Left cardiac atrium (tissue), 4 donors: ENCODE measurements at regions of chr6 and their contacts with region 1.

Region 1: DNA sequence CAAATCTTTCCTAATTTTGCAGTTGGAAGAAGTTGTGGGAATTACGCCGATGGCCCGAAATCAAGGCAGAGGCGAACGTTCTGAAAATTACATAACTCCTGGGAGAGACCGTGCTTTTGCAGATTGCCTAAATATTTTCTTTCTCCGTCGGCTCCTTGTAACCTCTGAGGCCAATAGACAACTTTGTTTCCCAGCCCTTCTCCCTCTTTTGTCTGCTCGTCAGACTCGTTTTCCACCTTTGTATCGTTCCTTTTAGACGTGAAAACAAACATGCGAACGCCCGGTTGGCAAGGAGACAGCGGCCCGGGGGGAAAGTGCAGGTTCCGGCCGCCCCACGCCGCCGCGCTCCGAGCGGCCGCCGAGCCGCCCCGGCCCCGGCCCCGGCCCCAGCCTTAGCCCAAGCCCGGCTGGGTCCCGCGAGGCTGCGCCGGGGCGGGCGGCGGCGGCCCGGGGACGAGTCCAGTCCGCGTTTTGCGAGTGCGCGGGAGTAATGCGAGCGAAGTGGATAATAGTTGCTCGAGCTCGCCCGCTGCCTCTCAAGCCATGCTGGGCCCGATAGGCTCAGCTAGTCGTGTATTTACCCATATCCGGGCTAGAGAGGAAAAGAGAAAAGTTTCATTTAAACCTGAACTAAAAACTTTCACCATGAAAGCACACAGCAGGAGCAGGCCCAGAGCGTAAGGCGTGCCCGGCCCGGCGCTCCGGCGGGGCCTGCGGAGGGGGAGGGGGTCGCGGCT is at the start of gene ARID1B:
- DNase-seq: peak; percentile 87
- ATAC-seq: peak; percentile 75 to 80
- total RNA-seq, gene ARID1B: 45.4 to 48.0 TPM

Region 2: DNA sequence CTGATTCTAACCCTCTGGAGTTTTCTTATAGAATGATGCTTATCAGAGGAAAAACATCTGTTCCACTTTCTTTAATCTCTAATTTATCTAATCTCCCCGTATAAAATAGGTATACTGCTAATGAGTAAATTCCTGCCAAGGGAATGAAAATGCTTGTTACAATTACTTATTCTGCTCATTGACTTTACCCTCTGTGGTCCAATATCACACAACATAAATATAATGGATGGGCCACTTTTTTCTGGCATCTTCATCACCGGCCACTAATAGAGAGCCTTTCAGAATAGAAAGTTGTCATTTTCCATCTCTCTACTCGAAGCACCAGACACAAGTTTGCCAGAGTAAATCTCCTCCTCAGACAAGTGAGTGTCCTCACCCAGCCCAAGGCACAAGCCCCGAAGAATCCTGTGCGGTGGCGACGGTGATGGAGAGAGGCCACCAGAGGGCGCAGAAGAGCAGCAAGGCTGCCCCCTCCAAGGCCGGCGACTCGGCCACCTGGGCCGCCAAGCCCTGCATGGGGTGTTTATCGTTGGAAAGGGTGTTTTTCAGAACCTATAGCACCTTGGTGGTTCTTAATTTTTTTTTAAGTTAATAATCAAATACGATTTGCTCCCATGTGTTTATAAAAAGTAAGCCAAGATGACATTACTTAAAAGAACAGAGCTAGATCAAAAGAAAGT is 212.7 kb before region 1 on chr6:
- intact Hi-C with region 1: loop called (anchors 5 to 10 kb)
- DNase-seq: peak; percentile 84
- ATAC-seq: peak; percentile 93 to 94

Region 3: GRCh38 chr6:156699017-156699421 is 78.0 kb before region 1 on chr6:
- intact Hi-C with region 1: loop called in 1 of 2 experiments (anchors 5 kb)
- DNase-seq: no peak
- ATAC-seq: no peak

Region 4: GRCh38 chr6:156953479-156954146 is 176.6 kb after region 1 on chr6:
- intact Hi-C with region 1: loop called in 1 of 2 experiments (anchors 10 kb)
- DNase-seq: no peak
- ATAC-seq: peak; percentile 56 to 86

Region 5: GRCh38 chr6:157184202-157185020 is 407.4 kb after region 1 on chr6:
- intact Hi-C with region 1: loop called in 1 of 2 experiments (anchors 10 kb)
- DNase-seq: peak; percentile 75
- ATAC-seq: peak; percentile 86 to 87